ENCODE measurements at regions of chr12 and their contacts with region 1.

Region 1: DNA sequence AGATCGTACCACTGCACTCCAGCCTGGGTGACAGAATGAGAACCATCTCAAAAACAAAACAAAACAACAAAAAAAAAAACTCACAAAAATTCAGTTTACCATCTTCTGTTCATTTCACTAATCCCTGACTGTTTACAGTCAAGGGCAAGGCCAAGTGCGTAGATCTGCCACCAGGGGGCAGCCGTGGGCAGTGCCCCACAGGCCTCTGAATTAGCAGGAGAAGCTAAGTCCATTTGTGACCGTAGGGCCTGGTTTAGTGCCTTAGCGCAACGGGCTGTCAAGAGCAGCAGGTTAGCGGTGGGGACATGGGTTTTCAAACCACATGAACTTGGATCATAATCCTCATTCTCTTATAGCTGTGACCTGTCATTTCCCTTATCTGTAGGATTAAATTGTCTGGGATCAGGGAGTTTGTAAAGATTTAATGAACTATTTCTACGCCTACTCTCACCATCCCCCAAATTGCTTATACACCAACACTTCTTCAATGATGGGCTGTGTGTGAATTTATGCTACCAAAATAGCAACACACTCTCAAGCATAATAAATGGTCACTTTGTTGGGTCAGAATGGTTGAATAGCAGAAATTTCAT is 49.0 kb downstream of the KCTD10 start:
- DNase-seq: peak; percentile 84
- H3K4me3 ChIP-seq: no peak overlapping the region
- H3K27ac ChIP-seq: no peak overlapping the region
- H3K4me1 ChIP-seq: no peaks in the 10 kb centered on the region
- H3K27me3 ChIP-seq: no peaks in the 10 kb centered on the region
- CTCF ChIP-seq: peak; percentile 99

Region 2: DNA sequence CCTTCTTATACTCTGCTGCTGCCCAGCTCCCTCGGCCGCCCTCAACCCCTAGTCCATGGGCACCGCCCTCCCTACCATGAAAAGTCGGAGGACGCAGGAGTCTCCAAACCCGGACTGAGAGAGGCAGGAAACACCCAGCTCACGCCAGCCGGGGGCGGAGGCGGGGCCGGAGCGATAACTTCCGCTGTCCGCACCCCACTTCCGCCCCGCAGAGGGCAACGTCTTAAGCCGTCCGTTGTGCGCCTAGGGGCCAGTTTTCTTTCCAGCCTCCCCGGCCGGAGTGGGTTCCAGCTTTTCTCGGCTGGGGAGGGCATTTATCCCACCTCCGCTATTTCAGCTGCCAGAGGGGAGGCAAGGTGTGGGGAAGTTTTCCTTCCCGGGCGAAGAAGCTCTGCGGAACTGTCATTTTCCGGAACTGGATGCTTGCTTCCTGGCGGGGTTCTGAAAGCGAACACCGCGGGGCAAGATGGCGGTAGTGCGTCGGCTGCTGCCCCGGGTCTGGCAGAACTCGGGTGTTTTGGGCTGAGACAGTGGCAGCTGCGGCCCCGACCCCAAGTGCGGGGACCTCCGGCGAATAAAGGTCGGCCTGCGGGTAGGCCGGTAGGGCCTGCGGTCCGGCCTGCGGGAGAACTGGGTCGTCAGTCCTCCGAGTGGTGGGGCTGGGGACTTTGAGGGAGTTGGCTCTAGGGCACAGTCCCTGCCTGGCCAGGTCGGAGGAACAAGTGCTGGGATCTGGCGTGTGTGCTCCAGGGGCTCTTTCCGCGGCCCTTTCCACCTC is 49.2 kb after region 1 on chr12 and contains the starts of genes KCTD10 and UBE3B:
- CTCF ChIA-PET with region 1: no interaction called
- POLR2A ChIA-PET with region 1: no interaction called
- intact Hi-C with region 1: loop called (anchors 5 kb)
- DNase-seq: peak; percentile 93
- H3K4me3 ChIP-seq: peak within 1 kb of the TSS; percentile 89
- H3K27ac ChIP-seq: peak within 1 kb of the TSS; percentile 99
- H3K4me1 ChIP-seq: peaks cover 17% of the 10 kb centered on the region
- H3K27me3 ChIP-seq: no peaks in the 10 kb centered on the region
- CTCF ChIP-seq: no peak
- total RNA-seq, gene KCTD10: 54.5 and 55.2 TPM in 2 replicates
- total RNA-seq, gene UBE3B: 29.2 and 31.7 TPM in 2 replicates

Region 3: GRCh38 chr12:109642506-109643132 is 214.5 kb after region 1 on chr12:
- CTCF ChIA-PET with region 1: no interaction called
- POLR2A ChIA-PET with region 1: no interaction called
- intact Hi-C with region 1: no loop called
- DNase-seq: no peak
- H3K4me3 ChIP-seq: no peak overlapping the region
- H3K27ac ChIP-seq: no peak overlapping the region
- H3K4me1 ChIP-seq: no peaks in the 10 kb centered on the region
- H3K27me3 ChIP-seq: no peaks in the 10 kb centered on the region
- CTCF ChIP-seq: no peak